A549 (cell line): ENCODE measurements at regions of chr5 and their contacts with region 1.

Region 1: DNA sequence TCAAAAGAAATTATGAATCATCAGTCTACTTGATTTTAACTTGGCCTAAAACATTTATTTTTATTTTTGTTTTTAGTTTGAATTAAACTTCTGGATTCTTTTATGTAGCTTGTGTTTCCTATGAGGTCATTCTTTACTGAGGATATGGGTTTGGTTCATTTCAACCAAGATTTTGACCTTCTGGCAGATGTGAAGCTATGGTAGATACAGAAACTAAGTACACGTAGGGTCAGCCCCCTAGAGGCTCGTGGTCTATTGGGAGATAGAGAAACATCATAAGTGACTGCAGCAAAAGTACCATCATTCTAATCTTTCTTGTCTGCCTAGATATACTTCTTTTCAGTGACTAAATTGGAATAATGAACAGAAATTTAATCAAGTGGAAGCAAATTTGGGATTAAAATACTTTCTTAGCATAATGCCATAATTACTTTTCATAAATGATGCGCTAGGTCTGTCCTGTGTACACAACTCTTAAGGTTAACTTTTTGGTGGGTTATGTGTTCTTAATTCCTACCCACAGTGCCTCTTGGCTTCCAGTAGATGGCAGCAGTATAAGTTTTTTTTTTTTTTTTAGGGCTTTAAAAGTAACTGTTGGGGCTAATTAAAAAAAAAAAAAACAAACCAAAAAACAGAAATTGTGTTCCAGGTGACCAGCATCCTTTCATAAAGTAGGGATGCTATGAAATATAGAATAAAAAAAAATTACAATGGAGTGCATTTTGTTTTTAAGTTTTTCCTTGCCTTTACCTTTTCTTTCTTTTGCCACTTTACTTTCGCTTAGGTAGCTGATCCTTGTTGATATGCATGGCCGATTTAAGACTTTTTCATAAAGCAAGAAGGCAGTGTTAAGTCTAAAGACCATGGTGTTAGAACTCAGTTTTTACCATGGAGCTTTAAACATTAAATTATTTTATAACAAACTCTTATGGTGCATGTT is 49.9 kb downstream of the LRRTM2 start:
- DNase-seq: peak; percentile 11 to 33
- ATAC-seq: peak; percentile 83 to 85
- H3K4me3 ChIP-seq: no peak overlapping the region
- H3K27ac ChIP-seq: no peak overlapping the region
- H3K4me1 ChIP-seq: no peaks in the 10 kb centered on the region
- CTCF ChIP-seq: peak; percentile 70
- EP300 ChIP-seq: no peak
- POLR2A ChIP-seq: no peak
- RAD21 ChIP-seq: peak; percentile 54 to 57

Region 2: DNA sequence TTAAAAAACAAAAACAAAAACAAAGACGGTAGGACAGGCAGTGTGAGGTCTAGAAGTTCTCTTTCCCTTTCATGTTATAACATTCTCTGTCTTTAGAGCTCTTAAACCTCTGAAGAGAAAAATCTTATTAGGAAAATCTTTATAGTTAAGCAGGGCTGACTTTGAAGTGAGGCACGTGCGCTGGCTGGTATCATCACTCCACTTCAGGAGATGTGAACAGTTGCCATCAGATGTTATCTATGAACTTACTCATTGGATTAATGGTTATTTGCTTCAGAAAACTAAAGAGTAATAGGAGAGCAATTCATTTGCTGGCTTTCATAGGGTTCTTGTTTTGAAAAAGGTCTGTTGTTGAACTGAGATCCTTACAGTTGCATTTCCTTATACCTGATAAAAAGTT is 24.2 kb after region 1 on chr5:
- CTCF ChIA-PET with region 1: interaction called, 17 read pairs
- POLR2A ChIA-PET with region 1: no interaction called
- DNase-seq: no peak
- ATAC-seq: no peak
- H3K4me3 ChIP-seq: no peak overlapping the region
- H3K27ac ChIP-seq: no peak overlapping the region
- H3K4me1 ChIP-seq: peaks cover 51% of the 10 kb centered on the region
- CTCF ChIP-seq: no peak
- EP300 ChIP-seq: no peak
- POLR2A ChIP-seq: no peak
- RAD21 ChIP-seq: no peak

Region 3: DNA sequence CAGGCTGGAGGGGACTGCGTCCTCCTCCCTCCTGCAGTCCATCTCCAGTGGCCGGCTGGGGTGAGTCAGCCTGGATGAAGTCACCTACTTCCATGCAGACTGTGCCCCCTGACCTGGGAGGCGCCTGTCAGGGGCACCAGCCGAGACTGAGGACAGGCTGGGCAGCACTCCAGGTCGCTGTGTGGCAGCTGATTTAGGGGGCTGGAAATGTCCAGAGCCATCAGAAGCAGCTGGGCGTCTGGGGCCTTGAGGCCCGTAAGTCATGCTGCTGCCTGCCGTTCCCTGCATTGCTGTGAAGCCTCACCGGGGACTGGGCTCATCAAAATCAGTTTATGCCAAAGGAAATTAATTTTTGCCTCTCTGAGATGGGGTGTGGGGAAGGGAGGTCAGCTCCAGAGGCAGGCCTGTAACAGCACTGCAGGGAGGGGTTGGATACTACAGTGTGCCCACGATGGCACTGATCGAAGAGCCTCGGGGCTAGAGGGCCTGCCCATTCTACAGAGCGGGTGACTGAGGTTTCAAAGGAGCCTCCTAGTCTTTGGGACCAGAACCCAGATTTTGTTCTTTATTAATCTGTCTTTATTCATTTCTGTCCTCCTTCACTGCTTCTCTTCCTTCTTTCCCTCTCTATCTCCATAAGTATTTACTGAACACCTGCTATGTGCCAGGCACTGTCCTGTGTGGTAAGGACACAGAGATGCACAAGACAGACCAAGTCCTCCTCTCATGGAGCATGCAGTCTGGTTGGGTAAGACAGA is 900.1 kb after region 1 on chr5:
- CTCF ChIA-PET with region 1: no interaction called
- POLR2A ChIA-PET with region 1: no interaction called
- DNase-seq: peak in 1 of 2 experiments; percentile 73
- ATAC-seq: peak; percentile 94 to 97
- H3K4me3 ChIP-seq: no peak overlapping the region
- H3K27ac ChIP-seq: peak overlapping the region; percentile 52 to 78; a peak in 5 of 6 replicates
- H3K4me1 ChIP-seq: peaks cover 16% of the 10 kb centered on the region
- CTCF ChIP-seq: no peak
- EP300 ChIP-seq: no peak
- POLR2A ChIP-seq: no peak
- RAD21 ChIP-seq: no peak